ENCODE measurements at regions of chr1 and their contacts with region 1.

Region 1: DNA sequence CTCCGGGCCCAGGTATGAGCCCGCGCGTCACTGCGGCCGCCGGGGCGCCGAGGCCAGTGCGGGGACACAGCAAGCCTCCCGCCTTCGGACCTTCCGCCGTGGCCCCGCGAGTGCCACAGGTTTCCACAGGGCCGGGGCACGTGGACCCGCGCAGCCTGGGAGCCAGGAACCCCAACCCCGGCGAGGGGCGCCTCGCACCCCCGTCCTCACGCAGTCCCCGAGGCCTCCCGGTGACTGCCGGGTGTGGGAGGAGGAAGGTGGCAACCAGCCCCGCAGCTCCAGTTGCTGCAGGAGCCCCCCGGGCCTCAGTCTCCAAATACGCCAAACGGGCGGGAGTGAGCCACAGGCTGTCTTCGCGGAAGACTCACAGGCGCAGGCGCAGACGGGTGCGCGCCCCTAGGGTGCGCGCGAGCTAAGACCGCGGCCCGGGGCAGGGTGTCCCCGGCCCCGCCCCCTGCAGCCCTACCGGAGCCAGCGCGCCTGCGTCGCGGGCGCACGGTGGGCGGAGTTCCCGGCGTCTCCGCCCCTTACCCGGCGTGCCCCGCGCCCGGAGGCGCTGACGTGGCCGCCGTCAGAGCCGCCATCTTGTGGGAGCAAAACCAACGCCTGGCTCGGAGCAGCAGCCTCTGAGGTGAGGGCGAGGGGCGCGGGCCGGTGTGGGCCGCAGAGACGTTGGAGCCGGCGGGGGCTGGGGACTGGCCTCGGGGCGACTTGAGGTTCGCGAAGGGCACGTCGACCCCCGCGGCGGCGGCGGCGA is at the start of gene ARF1:
- DNase-seq: peak; percentile 100

Region 2: GRCh38 chr1:228101994-228102790 is 19.9 kb after region 1 on chr1:
- CTCF ChIA-PET with region 1: interaction called, 3 read pairs
- POLR2A ChIA-PET with region 1: interaction called, 23 read pairs
- DNase-seq: peak; percentile 77